Activated CD4-positive, alpha-beta memory T cell treated with anti-CD3 and anti-CD28 coated beads for 36 hours (primary cell): ENCODE measurements at regions of chr9 and their contacts with region 1.

Region 1: GRCh38 chr9:21709464-21710058 is 92.9 kb upstream of the MTAP start:
- DNase-seq: peak; percentile 65
- H3K4me3 Mint-ChIP-seq: no peak overlapping the region
- H3K27ac Mint-ChIP-seq: no peak overlapping the region
- H3K4me1 Mint-ChIP-seq: peaks cover 7% of the 10 kb centered on the region
- H3K27me3 Mint-ChIP-seq: no peaks in the 10 kb centered on the region

Region 2: DNA sequence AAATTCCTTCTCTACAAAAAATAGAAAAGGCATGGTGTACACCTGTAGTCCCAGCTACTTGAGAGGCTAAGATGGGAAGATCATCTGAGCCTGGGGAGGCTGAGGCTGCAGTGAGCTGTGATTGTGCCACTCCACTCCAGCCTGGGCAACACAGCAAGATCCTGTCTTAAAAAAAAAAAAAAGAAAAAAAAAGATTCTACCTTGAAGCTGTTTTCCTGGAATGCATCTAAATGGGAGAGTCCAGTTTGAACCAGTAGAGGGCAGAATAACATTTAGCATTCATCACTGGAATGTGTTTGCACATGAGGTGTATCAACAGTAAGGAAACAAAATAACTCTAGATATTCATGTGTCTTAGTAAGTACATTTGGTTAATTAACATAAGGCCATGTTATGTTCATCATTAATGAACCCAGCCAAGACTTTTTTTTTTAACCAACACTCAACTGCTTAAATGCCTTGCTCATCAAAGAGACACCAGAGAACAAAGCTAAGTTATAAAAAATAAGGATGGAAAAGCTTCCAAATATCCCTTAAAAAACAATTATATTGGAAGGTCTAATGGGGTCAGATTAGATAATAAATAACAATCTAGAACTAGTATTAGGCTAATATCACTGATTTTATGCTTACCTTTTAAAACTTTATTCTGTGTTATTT is 243.6 kb before region 1 on chr9:
- CTCF ChIA-PET with region 1: interaction called, 5 read pairs
- POLR2A ChIA-PET with region 1: no interaction called
- intact Hi-C with region 1: loop called (anchors 5 kb)
- DNase-seq: no peak
- H3K4me3 Mint-ChIP-seq: no peak overlapping the region
- H3K27ac Mint-ChIP-seq: no peak overlapping the region
- H3K4me1 Mint-ChIP-seq: no peaks in the 10 kb centered on the region
- H3K27me3 Mint-ChIP-seq: peaks cover 4% of the 10 kb centered on the region

Region 3: DNA sequence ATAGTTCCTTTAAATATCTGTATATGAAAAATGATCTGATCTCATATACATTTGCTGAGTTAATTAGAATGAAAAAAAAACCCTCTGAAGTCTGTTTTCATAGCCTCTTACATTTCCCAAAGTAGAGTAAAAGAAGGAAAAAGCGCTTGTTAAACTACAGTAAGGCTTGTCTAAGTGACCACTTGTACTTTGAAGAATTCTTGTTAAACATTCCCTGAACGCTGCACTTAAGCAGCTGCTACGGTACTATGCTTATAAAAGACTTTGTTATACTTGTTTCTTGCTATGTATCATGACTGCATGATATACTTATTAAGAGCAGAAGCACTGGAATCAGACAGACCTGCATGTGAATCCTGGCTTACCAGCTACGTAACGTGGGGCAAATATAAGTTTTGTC is 11.2 kb after region 1 on chr9:
- CTCF ChIA-PET with region 1: interaction called, 15 read pairs
- POLR2A ChIA-PET with region 1: no interaction called
- intact Hi-C with region 1: no loop called
- DNase-seq: no peak
- H3K4me3 Mint-ChIP-seq: no peak overlapping the region
- H3K27ac Mint-ChIP-seq: no peak overlapping the region
- H3K4me1 Mint-ChIP-seq: no peaks in the 10 kb centered on the region
- H3K27me3 Mint-ChIP-seq: peaks cover 15% of the 10 kb centered on the region